ENCODE measurements at regions of chr2 and their contacts with region 1.

Region 1: GRCh38 chr2:24920098-24920808 is at the start of gene ADCY3:
- DNase-seq: peak; percentile 64
- H3K4me3 Mint-ChIP-seq: peak within 1 kb of the TSS; percentile 95
- H3K27ac Mint-ChIP-seq: peak within 1 kb of the TSS; percentile 86
- H3K4me1 Mint-ChIP-seq: peaks cover 30% of the 10 kb centered on the region
- H3K27me3 Mint-ChIP-seq: no peaks in the 10 kb centered on the region
- total RNA-seq, gene ADCY3: 44.8 to 49.9 TPM

Region 2: DNA sequence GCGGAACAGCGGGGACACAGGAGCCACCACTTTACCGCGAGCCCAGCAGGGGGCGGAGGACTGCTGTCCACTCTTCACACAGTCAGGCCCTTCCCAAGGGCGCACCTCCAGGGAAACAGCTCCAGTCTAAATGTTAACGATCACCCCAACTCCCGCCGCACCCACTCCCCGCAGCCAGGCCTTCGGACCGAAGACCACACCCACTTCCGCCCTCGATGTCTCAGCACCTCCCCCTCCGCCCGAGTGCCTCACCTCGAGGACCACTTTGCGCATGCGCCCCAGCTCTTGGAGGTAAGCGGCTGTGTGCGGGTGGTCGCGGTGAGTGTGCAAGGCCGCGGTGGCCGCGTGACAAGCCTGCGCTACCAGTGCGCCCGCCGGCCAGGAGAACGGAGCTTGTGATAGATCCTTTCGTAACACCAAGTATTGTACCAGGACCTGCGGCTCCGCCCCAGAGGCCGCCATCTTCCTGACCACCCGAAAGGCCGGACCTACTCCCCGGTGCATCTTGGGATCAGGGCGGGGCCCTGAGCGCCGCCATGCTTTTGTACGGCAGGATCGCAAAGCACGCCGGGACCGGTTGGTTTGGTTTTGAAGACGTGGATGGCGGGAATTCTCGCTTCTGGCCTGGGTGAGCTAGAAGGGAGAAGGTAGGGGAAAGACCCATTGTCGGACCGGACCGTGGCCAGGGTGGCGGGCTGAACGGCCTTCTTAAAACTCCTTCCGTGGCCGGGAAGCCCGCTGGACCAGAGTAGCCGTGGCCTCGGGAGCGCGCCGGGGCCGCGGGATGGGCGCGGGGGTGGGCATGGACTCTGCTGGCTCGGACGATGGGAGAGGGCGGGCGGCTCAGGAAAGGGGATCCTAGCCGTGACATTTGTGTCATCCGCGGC is 127.1 kb before region 1 on chr2 and contains the starts of genes CENPO and PTRHD1:
- CTCF ChIA-PET with region 1: no interaction called
- intact Hi-C with region 1: loop called (anchors 1 kb)
- DNase-seq: peak; percentile 97
- H3K4me3 Mint-ChIP-seq: peak within 1 kb of the TSS; percentile 97
- H3K27ac Mint-ChIP-seq: peak within 1 kb of the TSS; percentile 99
- H3K4me1 Mint-ChIP-seq: peaks cover 40% of the 10 kb centered on the region
- H3K27me3 Mint-ChIP-seq: no peaks in the 10 kb centered on the region
- total RNA-seq, gene CENPO: 36.4 to 38.5 TPM
- total RNA-seq, gene PTRHD1: 21.7 to 23.5 TPM

Region 3: GRCh38 chr2:25032094-25032493 is 111.8 kb after region 1 on chr2:
- CTCF ChIA-PET with region 1: no interaction called
- intact Hi-C with region 1: no loop called
- DNase-seq: no peak
- H3K4me3 Mint-ChIP-seq: no peak overlapping the region
- H3K27ac Mint-ChIP-seq: no peak overlapping the region
- H3K4me1 Mint-ChIP-seq: peaks cover 6% of the 10 kb centered on the region
- H3K27me3 Mint-ChIP-seq: no peaks in the 10 kb centered on the region

Measured in activated naive CD4-positive, alpha-beta T cell treated with anti-CD3 and anti-CD28 coated beads for 36 hours (primary cell).